Panc1 (cell line): ENCODE measurements at regions of chr20 and their contacts with region 1.

Region 1: DNA sequence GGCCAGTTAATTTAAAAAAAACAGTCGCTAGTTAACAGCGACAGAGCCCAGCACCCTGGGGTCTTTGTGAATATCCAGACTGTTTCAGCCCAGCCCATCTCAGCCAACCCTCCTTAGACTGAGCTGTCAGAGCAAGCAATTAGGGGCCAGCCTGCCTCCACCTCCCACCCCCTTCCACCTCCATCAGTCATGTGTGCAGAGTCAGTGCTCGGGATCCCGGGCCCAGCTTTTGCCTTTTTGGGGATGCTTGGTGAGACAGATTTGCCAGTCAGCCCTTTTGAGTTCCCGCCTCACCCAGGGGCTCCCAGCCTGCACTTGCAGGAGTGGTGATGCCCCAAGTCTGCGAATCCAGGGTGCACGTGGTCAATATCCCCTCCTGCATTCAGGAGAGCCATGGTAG is 6.5 kb upstream of the FAM83D start:
- DNase-seq: no peak
- ATAC-seq: no peak
- H3K4me3 ChIP-seq: no peak overlapping the region
- H3K27ac ChIP-seq: no peak overlapping the region
- H3K4me1 ChIP-seq: no peaks in the 10 kb centered on the region
- H3K27me3 ChIP-seq: 0 out of 2 replicates have a peak, but pooled peaks cover 2% of the 10 kb centered on the region
- CTCF ChIP-seq: no peak

Region 2: GRCh38 chr20:38934530-38934929 is 14.8 kb after region 1 on chr20:
- CTCF ChIA-PET with region 1: interaction called, 14 read pairs
- POLR2A ChIA-PET with region 1: no interaction called
- in situ Hi-C with region 1: no loop called
- intact Hi-C with region 1: no loop called
- DNase-seq: no peak
- ATAC-seq: no peak
- H3K4me3 ChIP-seq: no peak overlapping the region
- H3K27ac ChIP-seq: no peak overlapping the region
- H3K4me1 ChIP-seq: peaks cover 8% of the 10 kb centered on the region
- H3K27me3 ChIP-seq: no peaks in the 10 kb centered on the region
- CTCF ChIP-seq: no peak